ENCODE measurements at regions of chr16 and their contacts with region 1.

Region 1: GRCh38 chr16:30984669-30985400 is at the start of gene HSD3B7:
- DNase-seq: peak; percentile 98
- H3K4me3 ChIP-seq: peak within 1 kb of the TSS; percentile 50 to 64 (median 53)
- H3K27ac ChIP-seq: peak within 1 kb of the TSS; percentile 66 to 77 (median 72)
- H3K4me1 ChIP-seq: peaks cover 11 to 22% (median 20%) of the 10 kb centered on the region in 4 donors
- H3K27me3 ChIP-seq: no peaks in the 10 kb centered on the region
- CTCF ChIP-seq: peak; percentile 93 to 97 (median 93)
- EP300 ChIP-seq: no peak
- POLR2A ChIP-seq: no peak
- total RNA-seq, gene HSD3B7: 15.4 to 33.0 (median 17.9) TPM

Region 2: GRCh38 chr16:30896889-30897733 is 87.7 kb before region 1 on chr16:
- intact Hi-C with region 1: no loop called
- DNase-seq: peak; percentile 98
- H3K4me3 ChIP-seq: peak overlapping the region; percentile 63 to 71 (median 68)
- H3K27ac ChIP-seq: peak overlapping the region; percentile 96 to 99 (median 98)
- H3K4me1 ChIP-seq: peaks cover 35 to 61% (median 55%) of the 10 kb centered on the region in 4 donors
- H3K27me3 ChIP-seq: no peaks in the 10 kb centered on the region
- CTCF ChIP-seq: peak in 1 of 3 experiments; percentile 20
- EP300 ChIP-seq: no peak
- POLR2A ChIP-seq: peak; percentile 13

Region 3: GRCh38 chr16:31032736-31033708 is 48.2 kb after region 1 on chr16 and contains the start of gene STX4:
- intact Hi-C with region 1: no loop called
- DNase-seq: peak; percentile 99
- H3K4me3 ChIP-seq: peak within 1 kb of the TSS; percentile 76 to 94 (median 89)
- H3K27ac ChIP-seq: peak within 1 kb of the TSS; percentile 91 to 95 (median 95)
- H3K4me1 ChIP-seq: peaks cover 17 to 36% (median 31%) of the 10 kb centered on the region in 4 donors
- H3K27me3 ChIP-seq: no peaks in the 10 kb centered on the region
- CTCF ChIP-seq: peak in 1 of 3 experiments; percentile 3
- EP300 ChIP-seq: no peak
- POLR2A ChIP-seq: no peak
- total RNA-seq, gene STX4: 36.8 to 54.0 (median 41.0) TPM

Region 4: DNA sequence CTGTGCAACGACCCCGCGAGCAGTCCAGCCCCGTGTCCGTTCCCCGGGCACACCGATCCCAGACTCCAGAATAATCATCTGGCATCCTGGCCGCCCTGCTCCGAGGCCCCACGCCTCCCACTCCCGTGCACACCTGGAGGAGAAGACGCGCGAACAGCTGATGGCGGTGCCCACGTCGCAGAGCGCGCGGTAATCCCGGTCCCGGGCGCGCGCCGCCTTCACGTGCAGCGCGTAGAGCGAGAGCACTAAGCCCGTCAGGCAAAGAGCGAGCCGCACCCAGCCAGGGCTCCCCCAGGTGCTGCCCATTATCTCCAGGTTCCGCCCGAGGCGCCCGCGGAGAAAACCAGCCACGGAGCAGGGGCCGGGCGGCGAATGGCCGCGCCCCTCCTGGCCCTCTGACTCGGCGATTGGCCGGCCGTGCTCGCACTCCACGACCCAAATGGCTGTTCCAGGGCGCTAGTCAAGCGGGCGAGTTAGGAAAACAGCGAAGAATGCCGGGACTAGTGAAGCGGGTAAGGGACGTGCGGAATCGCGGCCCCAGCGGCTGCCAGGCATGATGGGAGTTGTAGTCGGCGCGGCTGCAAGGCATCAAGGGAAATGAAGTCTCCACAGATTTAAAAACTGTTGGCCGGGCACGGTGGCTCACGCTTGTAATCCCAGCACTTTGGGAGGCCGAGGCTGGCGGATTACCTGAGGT is 109.7 kb after region 1 on chr16 and contains the start of gene VKORC1:
- intact Hi-C with region 1: loop called (anchors 5 kb)
- DNase-seq: peak; percentile 98
- H3K4me3 ChIP-seq: peak within 1 kb of the TSS; percentile 81 to 91 (median 84)
- H3K27ac ChIP-seq: peak within 1 kb of the TSS; percentile 87 to 95 (median 92)
- H3K4me1 ChIP-seq: peaks cover 12 to 31% (median 23%) of the 10 kb centered on the region in 4 donors
- H3K27me3 ChIP-seq: no peaks in the 10 kb centered on the region
- CTCF ChIP-seq: peak in 1 of 3 experiments; percentile 33
- EP300 ChIP-seq: no peak
- POLR2A ChIP-seq: no peak
- total RNA-seq, gene VKORC1: 81.4 to 122 (median 108) TPM

Region 5: GRCh38 chr16:31142109-31143010 is 157.5 kb after region 1 on chr16:
- intact Hi-C with region 1: loop called (anchors 5 kb)
- DNase-seq: peak; percentile 100
- H3K4me3 ChIP-seq: peak overlapping the region; percentile 56 to 72 (median 62)
- H3K27ac ChIP-seq: peak overlapping the region; percentile 79 to 86 (median 82)
- H3K4me1 ChIP-seq: peaks cover 18 to 27% (median 23%) of the 10 kb centered on the region in 4 donors
- H3K27me3 ChIP-seq: peaks cover 0 to 5% (median 0%) of the 10 kb centered on the region in 4 donors
- CTCF ChIP-seq: peak in 2 of 3 experiments; percentile 99 to 100
- EP300 ChIP-seq: no peak
- POLR2A ChIP-seq: no peak

Region 6: DNA sequence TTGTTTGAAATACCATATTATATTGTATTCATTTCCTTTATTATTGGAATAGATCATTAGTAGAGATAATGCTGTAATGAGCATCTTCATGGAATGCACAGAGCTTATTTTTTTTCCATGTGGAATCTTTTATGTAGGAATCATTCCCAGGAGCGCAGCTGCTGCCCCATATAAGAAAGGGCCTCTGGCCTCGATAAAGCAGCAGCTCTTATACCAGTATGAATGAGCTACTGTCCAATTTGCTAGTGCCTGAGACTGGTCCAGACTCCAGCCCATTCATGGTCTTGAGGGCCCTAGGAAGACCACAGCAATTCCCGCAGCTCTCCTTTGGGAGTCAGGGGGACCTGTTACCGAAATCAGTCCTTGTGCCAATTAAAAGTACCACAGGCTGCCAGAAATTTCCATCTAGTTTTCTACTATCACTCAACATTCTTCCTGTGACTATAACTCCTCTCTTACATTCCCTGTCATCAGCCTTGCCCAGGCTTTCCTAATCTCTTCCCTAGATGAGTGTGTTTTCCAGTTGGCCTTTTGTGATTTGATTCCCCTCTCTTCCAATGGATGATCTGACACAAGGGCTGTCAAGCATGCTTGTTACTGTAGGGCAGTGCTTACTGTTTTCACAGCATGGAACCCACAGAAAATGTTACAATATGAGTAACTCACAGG is 455.8 kb after region 1 on chr16:
- intact Hi-C with region 1: loop called (anchors 2 kb)
- DNase-seq: no peak
- H3K4me3 ChIP-seq: no peak overlapping the region
- H3K27ac ChIP-seq: no peak overlapping the region
- H3K4me1 ChIP-seq: peaks cover 7 to 17% (median 13%) of the 10 kb centered on the region in 4 donors
- H3K27me3 ChIP-seq: no peaks in the 10 kb centered on the region
- CTCF ChIP-seq: no peak
- EP300 ChIP-seq: no peak
- POLR2A ChIP-seq: no peak

Region 7: GRCh38 chr16:31868691-31869167 is 883.9 kb after region 1 on chr16:
- intact Hi-C with region 1: loop called (anchors 5 kb)
- DNase-seq: peak; percentile 96
- H3K4me3 ChIP-seq: peak overlapping the region in 1 of 4 donors; percentile 37
- H3K27ac ChIP-seq: peak overlapping the region in 2 of 4 donors; percentile 5 to 48
- H3K4me1 ChIP-seq: peaks cover 12 to 20% (median 16%) of the 10 kb centered on the region in 4 donors
- H3K27me3 ChIP-seq: no peaks in the 10 kb centered on the region
- CTCF ChIP-seq: peak; percentile 86 to 89 (median 89)
- EP300 ChIP-seq: no peak
- POLR2A ChIP-seq: no peak

Measured in esophagus muscularis mucosa (tissue), 4 donors.